ENCODE measurements at regions of chr11 and their contacts with region 1.

Region 1: DNA sequence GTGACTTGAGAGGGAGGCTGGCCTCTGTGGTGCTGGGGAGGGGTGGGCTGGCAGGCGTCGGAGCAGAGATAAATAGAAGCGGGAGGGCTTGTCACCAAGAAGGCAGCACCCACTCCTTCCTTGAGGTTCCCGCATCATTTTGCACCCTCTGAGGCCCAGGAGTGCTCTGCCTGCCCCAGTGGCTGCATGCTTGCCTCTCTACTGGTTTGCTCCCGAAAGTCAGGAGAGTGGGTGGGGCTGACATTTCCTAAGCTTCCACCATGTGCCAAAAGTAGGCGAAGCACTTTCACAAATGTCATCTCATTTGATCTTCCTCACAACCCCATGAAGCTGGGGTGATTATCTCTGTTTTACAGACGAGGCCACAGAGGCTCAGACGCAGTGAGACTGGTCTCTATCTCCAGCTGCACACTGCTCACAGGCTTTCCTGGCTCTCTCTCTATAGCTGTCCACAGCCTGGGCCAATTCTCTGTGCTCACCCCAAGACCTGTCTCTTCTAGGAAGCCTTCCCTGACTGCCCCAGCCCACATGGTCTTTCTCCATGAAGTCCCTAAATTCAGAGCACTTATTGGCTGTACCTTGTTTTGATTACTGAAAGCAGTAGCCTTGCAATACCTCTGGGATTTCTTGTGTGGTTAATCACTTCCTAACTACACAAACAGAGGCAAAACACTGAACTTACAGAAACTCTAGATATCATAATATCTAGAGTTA is 2.6 kb upstream of the UCP3 start:
- DNase-seq: peak; percentile 72 to 97 (median 87)
- ATAC-seq: peak; percentile 92
- H3K4me3 ChIP-seq: no peak overlapping the region
- H3K27ac ChIP-seq: peak overlapping the region; percentile 83
- H3K4me1 ChIP-seq: peaks cover 62 to 68% of the 10 kb centered on the region in 2 experiments
- H3K27me3 ChIP-seq: no peaks in the 10 kb centered on the region
- CTCF ChIP-seq: no peak
- EP300 ChIP-seq: peak; percentile 94
- POLR2A ChIP-seq: peak; percentile 48; the same call in 1 of the 2 replicates
- RAD21 ChIP-seq: no peak; a peak in 1 of 4 replicates

Region 2: DNA sequence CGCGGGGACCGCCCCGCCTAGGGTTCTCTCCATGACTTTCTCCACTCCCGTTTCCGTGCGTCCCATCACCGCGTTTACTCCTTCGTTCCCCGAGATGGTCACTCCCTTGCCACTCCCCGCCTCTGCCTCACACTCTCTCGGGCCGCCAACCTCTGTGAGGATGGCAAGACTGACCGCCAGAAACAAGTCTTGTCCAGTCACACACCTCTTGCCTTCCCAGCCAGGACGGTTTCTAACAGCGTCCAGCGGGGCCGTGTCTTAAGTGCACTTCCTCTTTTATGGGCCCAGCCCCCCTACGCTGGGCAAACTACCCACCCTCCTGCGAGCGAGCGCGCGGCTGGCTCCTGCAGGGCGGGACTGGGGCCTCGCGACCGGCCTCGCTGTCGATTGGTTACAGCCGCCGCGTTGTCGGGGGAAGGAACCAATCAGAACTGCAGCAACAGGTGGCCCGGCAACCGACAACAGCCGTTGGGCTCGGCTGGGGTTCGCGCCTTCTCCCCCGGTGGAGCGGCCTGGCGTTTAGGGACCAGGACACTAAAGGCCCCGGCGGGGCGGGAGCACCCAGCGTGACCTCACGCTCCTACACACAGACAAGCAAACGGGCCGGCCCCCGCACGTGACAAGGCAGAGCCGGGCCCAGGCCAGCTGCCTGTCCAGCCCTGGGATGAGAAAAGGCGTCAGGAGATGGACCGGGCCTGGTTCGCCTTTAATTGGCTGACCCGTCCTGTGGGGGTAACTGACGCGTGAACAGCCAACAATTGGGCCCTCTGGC is 28.4 kb before region 1 on chr11:
- CTCF ChIA-PET with region 1: no interaction called
- POLR2A ChIA-PET with region 1: interaction called, 7 read pairs
- in situ Hi-C with region 1: no loop called
- intact Hi-C with region 1: loop called (anchors 1 kb)
- DNase-seq: peak; percentile 96 to 99 (median 98)
- ATAC-seq: peak; percentile 87
- H3K4me3 ChIP-seq: peak overlapping the region; percentile 67
- H3K27ac ChIP-seq: peak overlapping the region; percentile 99
- H3K4me1 ChIP-seq: peaks cover 41 to 53% of the 10 kb centered on the region in 2 experiments
- H3K27me3 ChIP-seq: no peaks in the 10 kb centered on the region
- CTCF ChIP-seq: peak in 1 of 3 experiments; percentile 1; a peak in 1 of 6 replicates
- EP300 ChIP-seq: peak; percentile 62
- POLR2A ChIP-seq: peak; percentile 95
- RAD21 ChIP-seq: no peak

Region 3: GRCh38 chr11:74085542-74085892 is 74.0 kb after region 1 on chr11:
- CTCF ChIA-PET with region 1: no interaction called
- POLR2A ChIA-PET with region 1: interaction called, 3 read pairs
- in situ Hi-C with region 1: no loop called
- intact Hi-C with region 1: loop called (anchors 5 kb)
- DNase-seq: peak; percentile 45 to 79 (median 54)
- ATAC-seq: peak; percentile 87
- H3K4me3 ChIP-seq: no peak overlapping the region
- H3K27ac ChIP-seq: peak overlapping the region; percentile 48
- H3K4me1 ChIP-seq: peaks cover 7 to 28% of the 10 kb centered on the region in 2 experiments
- H3K27me3 ChIP-seq: no peaks in the 10 kb centered on the region
- CTCF ChIP-seq: 0 out of 6 replicates have a peak, but pooled peaks of 1 of the 3 experiments have one; percentile 4
- EP300 ChIP-seq: peak; percentile 41; the same call in 1 of the 2 replicates
- POLR2A ChIP-seq: no peak
- RAD21 ChIP-seq: peak in 1 of 2 experiments; percentile 20; a peak in 1 of 4 replicates

Region 4: GRCh38 chr11:75248690-75249268 is 1237.3 kb after region 1 on chr11:
- CTCF ChIA-PET with region 1: no interaction called
- POLR2A ChIA-PET with region 1: no interaction called
- in situ Hi-C with region 1: no loop called
- intact Hi-C with region 1: no loop called
- DNase-seq: peak; percentile 82 to 94 (median 86)
- ATAC-seq: peak; percentile 95
- H3K4me3 ChIP-seq: no peak overlapping the region
- H3K27ac ChIP-seq: no peak overlapping the region
- H3K4me1 ChIP-seq: no peaks in the 10 kb centered on the region; a peak in 1 of 5 replicates
- H3K27me3 ChIP-seq: peaks cover 6 to 8% of the 10 kb centered on the region in 2 experiments
- CTCF ChIP-seq: peak; percentile 100
- EP300 ChIP-seq: no peak
- POLR2A ChIP-seq: no peak
- RAD21 ChIP-seq: peak; percentile 99 to 100

Measured in K562 (cell line).